ENCODE measurements at regions of chr1 and their contacts with region 1.

Region 1: GRCh38 chr1:225977937-225978748 is 21.0 kb downstream of the SDE2 start:
- DNase-seq: no peak
- H3K4me3 ChIP-seq: no peak overlapping the region
- H3K27ac ChIP-seq: no peak overlapping the region
- H3K4me1 ChIP-seq: peaks cover 6% of the 10 kb centered on the region
- H3K27me3 ChIP-seq: no peaks in the 10 kb centered on the region
- CTCF ChIP-seq: no peak
- POLR2A ChIP-seq: no peak

Region 2: GRCh38 chr1:225318706-225319575 is 659.2 kb before region 1 on chr1:
- intact Hi-C with region 1: loop called (anchors 5 kb)
- DNase-seq: peak; percentile 24
- H3K4me3 ChIP-seq: no peak overlapping the region
- H3K27ac ChIP-seq: no peak overlapping the region
- H3K4me1 ChIP-seq: no peaks in the 10 kb centered on the region
- H3K27me3 ChIP-seq: peaks cover 3% of the 10 kb centered on the region
- CTCF ChIP-seq: peak in 3 of 4 experiments; percentile 58 to 64 (median 63)
- POLR2A ChIP-seq: no peak

Region 3: DNA sequence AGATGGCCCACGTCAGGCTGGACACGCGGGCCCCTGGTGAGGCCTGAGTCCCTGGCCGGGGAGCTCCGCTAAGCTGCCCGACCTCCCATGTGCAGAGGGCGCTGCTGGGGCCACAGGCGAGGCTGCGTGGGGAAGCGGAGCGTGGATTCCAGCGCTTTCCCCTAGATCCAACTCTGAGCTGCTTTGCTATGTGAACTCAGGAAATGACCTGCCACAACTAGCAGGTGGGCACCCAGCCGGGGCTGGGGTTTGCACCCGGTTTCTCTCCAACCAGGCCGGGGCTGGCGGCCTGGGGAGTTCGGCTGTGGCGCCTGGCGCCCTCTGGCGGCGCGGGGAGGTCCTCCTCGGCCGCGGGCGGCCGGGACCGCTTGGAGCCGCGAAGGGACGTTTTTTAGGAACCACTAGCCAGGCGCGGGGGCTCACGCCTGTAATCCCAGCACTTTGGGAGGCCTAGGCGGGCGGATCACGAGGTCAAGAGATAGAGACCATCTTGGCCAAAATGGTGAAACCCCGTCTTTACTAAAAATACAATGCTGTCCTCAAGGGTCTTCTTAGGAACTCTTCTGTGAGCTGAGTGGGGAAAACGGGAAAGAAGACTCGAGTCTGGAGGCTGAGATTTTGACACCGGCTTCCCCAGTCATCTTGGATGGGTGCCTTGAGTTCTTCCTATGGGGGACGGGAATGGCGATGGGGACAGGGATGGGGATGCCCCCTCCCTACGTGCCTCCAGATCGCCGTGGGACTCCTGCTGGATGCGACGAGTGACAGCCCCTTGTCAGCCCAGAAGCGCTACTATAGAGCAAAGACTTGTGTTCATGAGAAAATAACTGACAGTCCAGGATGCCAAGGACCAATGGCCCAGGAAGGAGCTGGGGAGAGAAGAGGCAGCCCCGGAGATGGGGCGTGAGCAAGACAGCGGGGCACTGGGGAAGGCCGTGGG is 66.7 kb before region 1 on chr1:
- intact Hi-C with region 1: loop called (anchors 10 kb)
- DNase-seq: peak; percentile 35
- H3K4me3 ChIP-seq: no peak overlapping the region
- H3K27ac ChIP-seq: no peak overlapping the region
- H3K4me1 ChIP-seq: no peaks in the 10 kb centered on the region
- H3K27me3 ChIP-seq: no peaks in the 10 kb centered on the region
- CTCF ChIP-seq: peak; percentile 74 to 90 (median 89)
- POLR2A ChIP-seq: no peak

Region 4: GRCh38 chr1:226121587-226122400 is 143.7 kb after region 1 on chr1:
- intact Hi-C with region 1: no loop called
- DNase-seq: peak; percentile 60
- H3K4me3 ChIP-seq: peak overlapping the region; percentile 53 to 54
- H3K27ac ChIP-seq: peak overlapping the region; percentile 83 to 85
- H3K4me1 ChIP-seq: no peaks in the 10 kb centered on the region
- H3K27me3 ChIP-seq: no peaks in the 10 kb centered on the region
- CTCF ChIP-seq: peak; percentile 72 to 99 (median 95)
- POLR2A ChIP-seq: no peak

Measured in prostate gland (tissue), 2 donors.